Right cardiac atrium (tissue), 5 donors: ENCODE measurements at regions of chr3 and their contacts with region 1.

Region 1: DNA sequence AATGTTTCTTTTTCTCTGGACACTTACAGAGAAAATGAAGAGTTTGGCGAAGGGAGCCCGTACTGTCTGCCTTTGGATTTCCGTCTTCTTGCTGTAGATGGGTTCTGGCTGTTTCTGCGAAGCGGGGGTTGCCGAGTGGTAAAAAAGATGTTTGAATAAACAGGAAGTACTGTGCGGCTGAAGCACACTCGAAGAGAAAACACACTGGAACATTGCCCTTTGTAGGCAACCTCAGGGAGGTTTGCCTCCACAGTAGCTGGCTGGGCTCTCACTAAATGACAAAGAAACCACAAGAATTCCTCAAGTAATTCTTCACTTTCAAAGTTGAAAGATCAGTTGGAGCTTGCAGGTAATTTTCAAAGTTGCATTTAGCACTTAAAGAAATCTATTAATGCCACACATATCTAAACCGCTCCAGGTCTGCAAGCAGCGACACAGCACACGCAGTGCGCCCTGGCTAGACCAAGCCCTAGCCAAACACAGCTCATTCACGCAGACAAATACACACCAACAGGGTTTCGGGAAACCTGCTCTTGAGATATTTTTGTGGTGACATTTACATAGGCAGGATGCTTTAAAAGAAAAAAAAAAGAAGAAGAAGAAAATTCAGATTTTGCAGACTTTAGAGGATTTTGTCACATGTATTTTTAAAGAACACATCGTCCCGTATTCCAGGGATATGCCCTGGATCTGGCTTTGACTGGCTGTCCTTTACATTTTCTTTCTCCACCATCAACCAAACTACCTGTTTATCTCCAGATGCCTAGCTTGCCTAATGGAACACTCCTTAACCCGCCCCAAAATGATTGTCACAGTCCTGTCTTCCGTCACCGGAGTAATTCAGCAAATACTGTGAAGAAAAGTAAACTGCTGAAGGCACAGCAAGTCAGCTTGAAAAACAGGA is 452.8 kb downstream of the FOXP1 start:
- DNase-seq: peak; percentile 36 to 82 (median 75)
- ATAC-seq: peak; percentile 64 to 70
- H3K4me3 ChIP-seq: peak overlapping the region; percentile 74
- H3K27ac ChIP-seq: peak overlapping the region; percentile 95
- H3K4me1 ChIP-seq: no peaks in the 10 kb centered on the region
- H3K27me3 ChIP-seq: no peaks in the 10 kb centered on the region

Region 2: GRCh38 chr3:71045917-71046282 is 84.8 kb before region 1 on chr3:
- intact Hi-C with region 1: no loop called
- DNase-seq: no peak
- ATAC-seq: no peak
- H3K4me3 ChIP-seq: no peak overlapping the region
- H3K27ac ChIP-seq: no peak overlapping the region
- H3K4me1 ChIP-seq: peaks cover 16% of the 10 kb centered on the region
- H3K27me3 ChIP-seq: no peaks in the 10 kb centered on the region

Region 3: GRCh38 chr3:71064288-71064955 is 66.3 kb before region 1 on chr3:
- intact Hi-C with region 1: loop called in 2 of 4 experiments (anchors 2 to 5 kb)
- DNase-seq: peak; percentile 38 to 76 (median 63)
- ATAC-seq: peak; percentile 50 to 69
- H3K4me3 ChIP-seq: peak overlapping the region; percentile 78
- H3K27ac ChIP-seq: peak overlapping the region; percentile 74
- H3K4me1 ChIP-seq: peaks cover 7% of the 10 kb centered on the region
- H3K27me3 ChIP-seq: no peaks in the 10 kb centered on the region

Region 4: GRCh38 chr3:71247221-71247976 is 116.7 kb after region 1 on chr3:
- intact Hi-C with region 1: loop called in 1 of 4 experiments (anchors 10 kb)
- DNase-seq: peak in 2 of 3 donors; percentile 53 to 65
- ATAC-seq: peak; percentile 34 to 52
- H3K4me3 ChIP-seq: no peak overlapping the region
- H3K27ac ChIP-seq: peak overlapping the region; percentile 84
- H3K4me1 ChIP-seq: peaks cover 7% of the 10 kb centered on the region
- H3K27me3 ChIP-seq: no peaks in the 10 kb centered on the region

Region 5: DNA sequence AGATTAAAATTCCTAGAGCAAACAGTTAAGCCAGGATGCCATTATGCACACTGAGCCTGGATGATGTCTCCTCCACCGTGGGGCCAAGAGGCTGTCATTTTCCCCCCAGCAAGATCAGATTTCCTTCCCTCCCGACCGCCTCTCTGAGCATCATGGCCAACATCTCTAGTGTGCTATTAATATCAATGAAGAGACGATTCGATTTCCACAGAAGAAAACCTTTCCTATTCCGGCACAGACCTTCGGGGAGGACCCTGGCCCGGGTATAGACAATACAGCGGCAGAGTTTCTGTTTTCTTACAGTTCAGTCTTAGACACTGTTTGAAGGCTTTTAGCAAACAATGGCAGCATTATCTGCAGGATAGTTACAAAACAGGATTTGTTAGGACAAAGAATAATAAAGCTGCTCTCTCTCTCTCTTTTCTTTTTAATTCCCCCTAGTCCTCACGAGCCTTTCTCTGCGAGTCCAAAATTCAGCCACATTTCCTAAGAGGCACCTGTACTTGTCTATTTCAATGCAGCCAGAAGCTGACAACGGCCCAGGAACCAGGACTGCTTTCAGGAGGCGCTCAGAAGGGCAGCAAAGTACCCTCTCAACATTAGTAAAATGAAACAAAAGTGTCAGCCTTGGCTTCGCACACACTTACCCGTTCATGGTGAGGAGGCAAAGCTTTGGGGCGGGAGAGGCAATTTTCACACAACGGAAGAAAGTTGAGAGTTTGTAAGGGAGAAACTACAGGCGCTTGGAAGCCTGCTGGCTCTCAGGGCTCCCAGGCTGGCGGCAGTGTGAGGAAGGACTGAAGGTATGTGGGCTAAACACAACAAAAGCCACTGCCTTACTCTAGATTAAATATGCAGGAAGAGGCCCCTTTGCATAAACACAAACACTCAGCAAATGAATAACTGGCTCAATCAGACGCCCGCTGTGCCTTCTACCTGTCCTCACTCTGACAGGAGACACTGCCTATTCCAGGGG is 174.8 kb after region 1 on chr3:
- intact Hi-C with region 1: loop called in 1 of 4 experiments (anchors 10 kb)
- DNase-seq: peak in 1 of 3 donors; percentile 35
- ATAC-seq: peak; percentile 89 to 90
- H3K4me3 ChIP-seq: peak overlapping the region; percentile 64
- H3K27ac ChIP-seq: peak overlapping the region; percentile 67
- H3K4me1 ChIP-seq: peaks cover 4% of the 10 kb centered on the region
- H3K27me3 ChIP-seq: no peaks in the 10 kb centered on the region